ENCODE measurements at regions of chr17 and their contacts with region 1.

Region 1: DNA sequence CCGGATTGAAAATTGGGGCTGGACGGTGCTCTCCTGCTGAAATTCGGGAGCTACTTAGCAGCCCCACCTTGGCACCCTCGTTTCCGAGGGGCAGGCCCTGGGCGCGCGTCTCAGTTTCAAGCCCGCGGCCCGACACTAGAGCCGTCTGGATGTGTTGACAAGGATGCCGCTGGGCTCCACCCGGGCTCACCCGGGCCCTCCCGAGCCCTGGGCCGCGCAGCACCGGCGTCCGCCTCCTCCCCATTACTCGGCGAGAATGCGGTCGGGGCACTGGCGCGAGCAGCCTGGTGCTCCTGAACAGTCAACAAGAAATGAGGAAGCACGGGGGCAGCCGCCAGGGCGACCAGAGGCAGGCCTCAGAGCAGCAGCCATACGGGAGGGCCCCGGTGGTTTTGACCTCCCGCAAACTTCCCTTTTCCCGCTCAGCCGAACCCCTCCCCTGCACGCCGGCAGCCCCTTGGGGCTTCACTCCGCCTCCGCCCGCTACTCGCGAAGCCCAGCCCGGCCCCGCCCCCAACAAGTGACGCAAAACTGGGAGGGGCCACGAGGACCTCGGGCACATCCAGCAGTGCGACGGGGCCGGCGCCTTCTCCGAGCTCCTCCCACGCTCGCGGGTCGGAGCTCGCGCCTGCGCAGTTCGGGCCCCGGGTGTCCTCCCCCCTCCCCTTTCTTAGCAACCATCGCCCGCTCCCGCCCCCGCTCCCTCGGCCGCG is 447 bp upstream of the SEC14L1 start:
- DNase-seq: peak; percentile 97
- H3K4me3 Mint-ChIP-seq: peak overlapping the region; percentile 73
- H3K27ac Mint-ChIP-seq: peak overlapping the region; percentile 57
- H3K4me1 Mint-ChIP-seq: peaks cover 18% of the 10 kb centered on the region
- H3K27me3 Mint-ChIP-seq: no peaks in the 10 kb centered on the region
- CTCF ChIP-seq: no peak

Region 2: GRCh38 chr17:76658001-76658662 is 482.2 kb before region 1 on chr17:
- CTCF ChIA-PET with region 1: no interaction called
- POLR2A ChIA-PET with region 1: no interaction called
- intact Hi-C with region 1: no loop called
- DNase-seq: no peak
- H3K4me3 Mint-ChIP-seq: no peak overlapping the region
- H3K27ac Mint-ChIP-seq: no peak overlapping the region
- H3K4me1 Mint-ChIP-seq: peaks cover 9% of the 10 kb centered on the region
- H3K27me3 Mint-ChIP-seq: no peaks in the 10 kb centered on the region
- CTCF ChIP-seq: no peak

Region 3: DNA sequence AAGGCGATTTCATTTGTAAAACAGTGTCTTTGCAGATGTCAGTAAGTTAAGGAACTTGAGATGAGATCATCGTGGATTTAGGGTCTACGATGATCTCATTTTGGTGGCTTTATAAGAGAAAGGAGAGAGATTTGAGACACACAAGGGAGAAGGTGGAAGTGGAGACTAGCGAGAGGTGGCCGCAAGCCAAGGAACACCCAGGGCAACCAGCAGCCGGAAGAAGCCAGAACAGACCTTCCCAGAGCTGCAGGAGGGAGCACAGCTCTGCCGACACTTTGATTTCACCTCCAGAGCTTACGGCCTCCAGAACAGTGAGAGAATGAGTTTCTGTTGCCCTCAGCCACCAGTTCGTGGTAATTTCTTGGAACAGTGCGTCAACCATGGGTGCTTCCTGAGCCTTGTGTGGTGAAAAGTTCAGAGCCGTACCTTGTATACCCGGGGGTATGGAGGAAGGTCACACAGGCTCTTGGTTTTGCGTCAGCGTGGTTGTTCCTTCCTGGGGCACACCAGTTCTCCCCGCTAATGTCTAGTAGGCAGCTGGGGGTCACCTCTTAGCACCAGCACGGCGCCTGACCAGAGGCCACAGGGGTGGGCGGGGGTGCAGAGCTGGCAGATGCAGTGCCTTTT is 12.5 kb before region 1 on chr17:
- CTCF ChIA-PET with region 1: interaction called, 6 read pairs
- POLR2A ChIA-PET with region 1: interaction called, 77 read pairs
- intact Hi-C with region 1: loop called (anchors 2 kb)
- DNase-seq: peak; percentile 93
- H3K4me3 Mint-ChIP-seq: peak overlapping the region; percentile 55
- H3K27ac Mint-ChIP-seq: peak overlapping the region; percentile 46
- H3K4me1 Mint-ChIP-seq: peaks cover 40% of the 10 kb centered on the region
- H3K27me3 Mint-ChIP-seq: no peaks in the 10 kb centered on the region
- CTCF ChIP-seq: no peak

Region 4: GRCh38 chr17:77212081-77212834 is 71.9 kb after region 1 on chr17:
- CTCF ChIA-PET with region 1: no interaction called
- POLR2A ChIA-PET with region 1: no interaction called
- intact Hi-C with region 1: no loop called
- DNase-seq: no peak
- H3K4me3 Mint-ChIP-seq: no peak overlapping the region
- H3K27ac Mint-ChIP-seq: no peak overlapping the region
- H3K4me1 Mint-ChIP-seq: no peaks in the 10 kb centered on the region
- H3K27me3 Mint-ChIP-seq: no peaks in the 10 kb centered on the region
- CTCF ChIP-seq: no peak

Region 5: GRCh38 chr17:77254951-77255825 is 114.9 kb after region 1 on chr17:
- CTCF ChIA-PET with region 1: no interaction called
- POLR2A ChIA-PET with region 1: interaction called, 13 read pairs
- intact Hi-C with region 1: no loop called
- DNase-seq: peak; percentile 94
- H3K4me3 Mint-ChIP-seq: no peak overlapping the region
- H3K27ac Mint-ChIP-seq: peak overlapping the region; percentile 99
- H3K4me1 Mint-ChIP-seq: peaks cover 13% of the 10 kb centered on the region
- H3K27me3 Mint-ChIP-seq: no peaks in the 10 kb centered on the region
- CTCF ChIP-seq: no peak